ENCODE measurements at regions of chr3 and their contacts with region 1.

Region 1: GRCh38 chr3:13091898-13092611 is 18.8 kb upstream of the IQSEC1 start:
- DNase-seq: peak; percentile 83
- H3K4me3 Mint-ChIP-seq: no peak overlapping the region
- H3K27ac Mint-ChIP-seq: no peak overlapping the region
- H3K4me1 Mint-ChIP-seq: peaks cover 8% of the 10 kb centered on the region
- H3K27me3 Mint-ChIP-seq: peaks cover 11% of the 10 kb centered on the region

Region 2: GRCh38 chr3:12916159-12916558 is 175.9 kb before region 1 on chr3:
- CTCF ChIA-PET with region 1: no interaction called
- POLR2A ChIA-PET with region 1: no interaction called
- DNase-seq: peak; percentile 48
- H3K4me3 Mint-ChIP-seq: no peak overlapping the region
- H3K27ac Mint-ChIP-seq: peak overlapping the region; percentile 56
- H3K4me1 Mint-ChIP-seq: peaks cover 22% of the 10 kb centered on the region
- H3K27me3 Mint-ChIP-seq: no peaks in the 10 kb centered on the region

Region 3: DNA sequence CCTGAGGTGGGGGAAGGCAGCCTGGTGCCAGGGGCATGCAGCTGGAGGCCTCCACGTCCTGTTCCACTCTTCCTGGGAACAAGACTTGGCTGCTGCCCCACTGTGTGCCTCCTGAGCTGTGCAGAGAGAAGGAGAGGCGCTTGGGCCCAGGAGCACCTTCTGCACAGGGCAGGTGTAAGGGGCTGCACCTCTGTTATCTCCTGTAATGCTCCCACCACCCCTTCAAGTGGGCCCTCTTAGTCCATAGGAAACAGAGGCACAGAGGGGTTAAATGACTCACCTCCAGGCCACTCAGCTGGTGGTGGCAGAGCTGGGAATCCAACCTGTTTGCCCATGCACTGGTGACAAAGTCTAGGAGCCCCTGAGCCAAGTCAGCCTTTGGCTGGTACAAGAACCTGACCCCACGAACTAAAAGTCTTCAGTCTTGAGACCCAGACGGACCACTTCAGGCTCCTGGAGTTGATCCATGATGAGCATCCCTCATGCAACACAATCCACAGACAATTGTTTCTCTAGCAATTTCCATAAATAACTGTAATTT is 112.0 kb before region 1 on chr3:
- CTCF ChIA-PET with region 1: no interaction called
- POLR2A ChIA-PET with region 1: no interaction called
- DNase-seq: no peak
- H3K4me3 Mint-ChIP-seq: no peak overlapping the region
- H3K27ac Mint-ChIP-seq: no peak overlapping the region
- H3K4me1 Mint-ChIP-seq: peaks cover 31% of the 10 kb centered on the region
- H3K27me3 Mint-ChIP-seq: no peaks in the 10 kb centered on the region

Region 4: DNA sequence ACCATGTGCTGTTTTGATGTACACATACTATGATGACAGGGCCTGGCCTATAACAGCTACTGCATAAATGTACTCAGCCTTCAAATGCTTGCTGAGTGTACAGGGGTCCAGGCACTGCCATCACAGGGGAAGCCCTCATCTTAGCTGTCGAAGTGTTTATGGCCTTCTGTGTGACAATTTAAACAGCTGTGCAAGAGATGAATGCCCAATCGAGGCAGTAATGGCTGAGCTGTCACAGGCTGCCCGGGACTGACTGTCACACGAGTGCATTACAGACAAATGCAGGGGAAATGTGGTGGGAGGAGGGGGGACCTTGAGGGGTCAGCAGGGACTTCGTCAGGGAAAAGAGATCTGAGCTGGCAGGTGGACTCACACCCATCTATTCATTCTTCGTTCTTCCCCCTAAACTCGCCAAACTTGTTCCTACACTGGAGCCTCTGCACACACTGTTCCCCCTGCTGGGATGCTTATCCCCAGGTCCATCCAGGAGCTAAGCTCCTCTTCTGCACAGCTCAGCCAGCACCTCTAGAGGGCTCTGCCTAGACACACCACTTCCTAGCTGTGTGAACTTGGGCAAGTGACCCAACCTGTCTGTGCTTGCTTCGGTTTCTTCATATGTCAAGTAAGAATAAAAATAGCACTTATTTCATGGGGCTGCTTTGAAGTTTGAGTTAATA is 137.4 kb after region 1 on chr3:
- CTCF ChIA-PET with region 1: interaction called, 12 read pairs
- POLR2A ChIA-PET with region 1: no interaction called
- DNase-seq: peak; percentile 31
- H3K4me3 Mint-ChIP-seq: no peak overlapping the region
- H3K27ac Mint-ChIP-seq: no peak overlapping the region
- H3K4me1 Mint-ChIP-seq: peaks cover 22% of the 10 kb centered on the region
- H3K27me3 Mint-ChIP-seq: peaks cover 15% of the 10 kb centered on the region

Region 5: GRCh38 chr3:13346481-13347389 is 254.7 kb after region 1 on chr3:
- CTCF ChIA-PET with region 1: interaction called, 11 read pairs
- POLR2A ChIA-PET with region 1: no interaction called
- DNase-seq: peak; percentile 82
- H3K4me3 Mint-ChIP-seq: no peak overlapping the region
- H3K27ac Mint-ChIP-seq: peak overlapping the region; percentile 69
- H3K4me1 Mint-ChIP-seq: peaks cover 49% of the 10 kb centered on the region
- H3K27me3 Mint-ChIP-seq: no peaks in the 10 kb centered on the region

Region 6: DNA sequence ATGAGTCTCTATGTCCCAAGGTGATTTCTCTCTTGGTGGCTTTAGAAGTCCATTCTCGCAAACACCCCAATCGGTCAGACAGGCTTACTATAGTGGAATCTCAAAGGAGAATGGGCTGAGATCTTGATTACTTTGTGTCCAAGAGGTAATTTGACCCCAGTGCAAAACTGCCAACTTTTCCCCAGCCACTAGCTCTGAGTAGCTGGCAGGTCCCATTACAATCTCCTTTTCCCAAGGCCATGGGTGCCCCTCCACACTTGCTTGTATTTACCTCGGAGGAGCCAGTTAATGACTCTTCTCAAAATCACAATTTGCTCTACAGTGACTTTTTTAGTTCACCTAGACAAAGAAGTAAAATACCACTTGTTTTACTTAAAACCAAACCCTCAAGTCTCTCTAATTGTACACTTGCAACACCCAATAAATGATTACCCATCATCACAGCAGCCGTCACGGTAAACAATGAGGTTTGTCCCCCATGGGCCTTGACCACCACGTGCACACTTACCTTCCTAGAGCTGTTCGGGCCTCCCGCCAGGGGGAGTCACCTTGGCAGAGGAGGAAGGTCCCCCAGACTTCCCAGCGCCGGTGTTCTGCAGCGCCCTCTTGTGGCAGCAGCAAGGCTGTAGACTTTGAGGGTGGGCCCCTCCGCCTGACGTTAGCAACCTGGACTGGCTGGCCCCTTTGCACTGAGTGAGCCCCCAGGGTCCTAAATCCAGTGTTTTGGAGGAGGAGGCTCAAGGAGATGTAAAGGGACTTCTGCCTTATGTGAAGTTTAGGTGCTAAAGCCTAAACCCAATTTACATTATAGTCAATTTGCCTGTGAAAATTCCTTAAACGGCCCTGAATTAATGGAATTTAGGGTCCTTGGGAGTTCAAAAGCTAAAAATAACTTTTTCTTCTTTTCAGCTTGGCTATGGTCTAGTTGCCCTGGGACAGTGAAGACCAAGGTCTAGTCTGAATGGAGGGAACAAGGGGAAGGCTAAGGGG is 369.4 kb after region 1 on chr3:
- CTCF ChIA-PET with region 1: interaction called, 19 read pairs
- POLR2A ChIA-PET with region 1: no interaction called
- DNase-seq: peak; percentile 81
- H3K4me3 Mint-ChIP-seq: no peak overlapping the region
- H3K27ac Mint-ChIP-seq: no peak overlapping the region
- H3K4me1 Mint-ChIP-seq: no peaks in the 10 kb centered on the region
- H3K27me3 Mint-ChIP-seq: peaks cover 12% of the 10 kb centered on the region

Region 7: DNA sequence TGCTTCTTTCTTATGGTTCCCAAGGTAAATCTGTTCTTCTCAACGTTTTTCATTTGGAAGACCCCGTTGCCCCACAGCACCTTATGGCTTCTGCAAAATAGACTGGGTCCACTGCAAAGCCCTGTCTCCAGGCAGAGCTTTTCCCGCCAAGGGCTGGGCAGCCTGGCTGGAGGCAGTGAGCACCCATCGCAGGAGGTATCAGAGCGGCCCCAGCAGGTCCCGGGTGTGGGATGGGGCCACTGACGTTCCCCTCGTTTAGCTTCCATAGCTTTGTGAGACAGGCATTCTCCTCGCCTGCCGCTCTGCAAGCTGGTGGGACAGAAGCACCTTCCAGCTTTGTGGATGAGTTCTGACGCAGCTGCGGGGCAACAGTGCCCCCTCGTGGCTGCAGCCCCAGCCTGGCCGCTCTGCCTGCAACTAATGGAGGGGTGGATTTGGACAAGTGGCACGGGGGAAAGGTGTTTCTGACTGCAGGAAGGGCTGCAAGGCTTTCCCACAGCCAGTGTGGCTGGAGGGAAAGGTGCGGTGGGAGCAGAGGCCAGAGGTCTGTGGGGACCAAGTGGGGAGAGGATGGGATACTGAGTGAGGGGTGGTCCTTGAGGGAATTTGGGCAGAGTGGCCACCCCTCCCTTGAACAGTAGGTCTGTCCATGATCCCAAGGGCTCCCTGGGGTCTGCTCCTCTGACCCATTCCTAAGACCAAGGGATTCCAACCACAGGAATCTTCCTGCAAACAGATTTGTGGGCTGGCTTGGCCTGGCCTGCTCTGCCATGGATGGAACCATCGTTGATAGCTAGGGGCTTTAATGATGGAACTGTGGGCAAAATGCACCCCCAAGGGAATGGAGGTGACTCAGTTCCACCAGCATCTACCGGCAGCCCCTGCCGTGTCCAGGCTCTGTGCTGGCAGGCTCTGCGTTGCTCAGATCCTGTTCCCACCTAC is 556.3 kb after region 1 on chr3:
- CTCF ChIA-PET with region 1: interaction called, 10 read pairs
- POLR2A ChIA-PET with region 1: no interaction called
- DNase-seq: peak; percentile 78
- H3K4me3 Mint-ChIP-seq: peak overlapping the region; percentile 33
- H3K27ac Mint-ChIP-seq: peak overlapping the region; percentile 66
- H3K4me1 Mint-ChIP-seq: peaks cover 52% of the 10 kb centered on the region
- H3K27me3 Mint-ChIP-seq: peaks cover 29% of the 10 kb centered on the region

Measured in activated CD4-positive, alpha-beta memory T cell treated with anti-CD3 and anti-CD28 coated beads, Interleukin-2, amount 10 ng/mL, durations not matched to agents 7 days and 5 days (primary cell).